Vagina (tissue), 2 donors: ENCODE measurements at regions of chr9 and their contacts with region 1.

Region 1: DNA sequence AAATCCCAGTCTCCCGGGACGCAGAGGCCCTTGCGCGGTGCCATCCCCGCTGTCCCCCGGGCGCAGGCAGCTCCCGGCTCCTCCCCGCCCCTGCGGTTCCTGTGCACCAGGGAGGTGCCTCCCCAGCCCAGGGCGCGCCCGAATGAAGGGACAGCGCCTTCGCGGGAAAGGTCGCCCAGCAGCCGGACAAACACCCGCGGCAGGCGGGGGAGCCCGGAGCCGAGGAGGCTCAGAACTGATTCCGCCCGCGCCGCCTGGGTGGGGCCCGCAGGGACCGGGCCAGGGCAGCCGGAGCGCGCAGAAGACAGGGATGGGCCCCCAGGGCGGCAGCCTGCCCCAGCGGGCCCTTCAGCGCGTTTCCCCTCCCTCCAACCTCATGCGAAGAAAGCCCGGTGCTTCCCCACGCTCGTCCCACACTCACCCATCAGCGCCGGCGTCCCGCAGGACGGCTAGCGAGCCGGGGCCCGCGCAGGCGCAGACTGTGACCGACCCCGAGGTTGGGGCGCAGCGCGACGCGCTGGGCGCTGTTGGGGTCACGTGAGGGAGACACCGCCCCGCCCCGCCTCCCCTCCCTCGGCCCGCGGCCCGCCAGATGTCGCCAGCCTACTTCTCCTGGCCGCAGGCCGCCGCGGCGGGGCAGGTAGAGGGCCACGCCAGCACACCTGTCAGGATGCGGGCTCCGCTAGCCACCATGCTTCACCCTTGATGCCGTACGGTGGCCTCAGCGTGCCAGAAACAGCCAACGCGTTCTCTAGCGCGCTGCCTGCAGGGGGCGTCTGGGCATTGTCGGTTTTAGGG is at the start of gene SLC25A51:
- DNase-seq: peak in 1 of 2 donors; percentile 94
- H3K4me3 ChIP-seq: peak within 1 kb of the TSS; percentile 90 to 94
- H3K27ac ChIP-seq: peak within 1 kb of the TSS; percentile 73
- H3K4me1 ChIP-seq: peaks cover 30% of the 10 kb centered on the region
- H3K27me3 ChIP-seq: no peaks in the 10 kb centered on the region
- CTCF ChIP-seq: peak; percentile 61 to 97 (median 96)
- POLR2A ChIP-seq: no peak
- total RNA-seq, gene SLC25A51: 26.0 TPM

Region 2: DNA sequence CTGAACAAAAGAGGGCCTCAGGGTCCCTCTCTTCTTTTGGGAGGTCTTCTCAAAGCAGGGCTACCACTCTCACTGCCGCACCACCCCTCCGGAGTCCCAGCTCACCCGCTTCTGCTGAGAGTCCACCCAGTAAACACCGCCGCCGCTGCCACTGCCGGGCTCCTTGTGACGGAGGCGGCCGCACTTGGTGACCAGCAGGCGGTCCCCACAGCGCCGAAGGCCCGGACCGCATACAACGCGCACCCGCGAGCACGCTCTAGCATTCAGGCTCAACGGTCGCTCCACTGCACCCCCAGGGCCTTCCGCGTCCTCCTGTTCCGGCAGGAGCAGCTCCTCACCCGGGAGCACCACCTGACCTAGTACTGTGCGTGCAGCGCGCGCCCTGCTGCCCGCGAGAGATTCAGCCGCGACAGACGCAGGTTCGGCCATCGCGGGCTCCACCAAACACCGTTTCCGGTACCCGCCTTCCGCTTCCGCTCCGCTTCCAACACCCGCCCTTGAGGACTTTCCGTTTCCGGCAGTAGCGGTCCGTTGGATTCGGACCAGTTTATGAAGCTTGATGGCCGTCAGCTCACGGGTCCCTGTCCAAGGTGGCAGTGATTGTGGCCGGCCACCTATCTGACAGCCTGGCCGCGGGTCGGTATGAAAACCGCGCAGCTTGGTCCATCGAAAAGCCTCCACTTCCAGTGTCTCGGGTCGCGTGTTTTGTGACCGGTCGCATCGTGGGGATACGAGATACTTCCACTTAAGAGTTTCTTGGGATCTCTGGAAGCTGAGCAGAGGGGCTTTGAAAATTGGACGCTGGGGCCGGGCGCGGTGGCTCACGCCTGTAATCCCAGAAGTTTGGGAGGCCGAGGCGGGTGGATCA is 119.0 kb before region 1 on chr9 and contains the start of gene EXOSC3:
- intact Hi-C with region 1: loop called (anchors 10 kb)
- DNase-seq: no peak
- H3K4me3 ChIP-seq: peak within 1 kb of the TSS; percentile 89 to 96
- H3K27ac ChIP-seq: peak within 1 kb of the TSS; percentile 77
- H3K4me1 ChIP-seq: peaks cover 26% of the 10 kb centered on the region
- H3K27me3 ChIP-seq: no peaks in the 10 kb centered on the region
- CTCF ChIP-seq: no peak
- POLR2A ChIP-seq: no peak
- total RNA-seq, gene EXOSC3: 77.8 TPM

Region 3: DNA sequence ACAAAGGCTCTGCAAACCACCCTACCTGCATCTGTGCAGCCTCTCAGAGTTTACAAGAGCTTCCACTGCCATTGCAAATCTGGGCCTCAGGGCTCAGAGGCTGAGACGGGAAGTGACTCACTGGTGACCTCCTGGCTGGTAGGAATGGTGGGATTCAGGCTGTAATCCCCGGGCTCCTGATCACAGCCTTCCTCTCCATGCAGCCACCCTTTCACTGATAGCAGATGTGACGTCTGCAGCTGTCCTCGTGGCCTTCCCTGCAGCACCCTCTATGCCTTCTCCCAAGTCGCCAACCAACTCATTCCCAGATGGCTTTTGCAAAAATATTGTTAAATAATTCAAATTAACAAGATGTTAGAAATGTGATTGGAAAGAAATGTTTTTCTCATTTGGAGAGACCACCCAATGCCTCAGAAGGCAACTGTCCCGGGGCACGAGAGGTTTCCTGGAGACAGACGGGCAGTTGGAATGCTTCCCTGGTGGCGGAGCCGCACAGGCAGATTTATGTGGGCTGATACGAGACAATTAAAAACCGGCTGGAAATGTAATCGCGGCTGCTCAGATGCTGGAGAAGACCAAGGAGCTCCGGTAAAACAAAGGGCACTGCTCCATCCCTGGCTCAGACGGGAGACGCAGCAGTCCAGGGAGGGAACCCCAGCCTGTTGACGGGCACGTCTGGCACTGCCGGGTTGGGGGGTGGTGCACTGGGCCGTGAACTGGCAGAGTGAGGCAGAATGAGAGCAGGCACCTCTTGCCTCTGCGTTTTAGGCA is 34.5 kb after region 1 on chr9:
- intact Hi-C with region 1: no loop called
- DNase-seq: no peak
- H3K4me3 ChIP-seq: no peak overlapping the region
- H3K27ac ChIP-seq: no peak overlapping the region
- H3K4me1 ChIP-seq: peaks cover 33% of the 10 kb centered on the region
- H3K27me3 ChIP-seq: no peaks in the 10 kb centered on the region
- CTCF ChIP-seq: no peak
- POLR2A ChIP-seq: no peak

Region 4: DNA sequence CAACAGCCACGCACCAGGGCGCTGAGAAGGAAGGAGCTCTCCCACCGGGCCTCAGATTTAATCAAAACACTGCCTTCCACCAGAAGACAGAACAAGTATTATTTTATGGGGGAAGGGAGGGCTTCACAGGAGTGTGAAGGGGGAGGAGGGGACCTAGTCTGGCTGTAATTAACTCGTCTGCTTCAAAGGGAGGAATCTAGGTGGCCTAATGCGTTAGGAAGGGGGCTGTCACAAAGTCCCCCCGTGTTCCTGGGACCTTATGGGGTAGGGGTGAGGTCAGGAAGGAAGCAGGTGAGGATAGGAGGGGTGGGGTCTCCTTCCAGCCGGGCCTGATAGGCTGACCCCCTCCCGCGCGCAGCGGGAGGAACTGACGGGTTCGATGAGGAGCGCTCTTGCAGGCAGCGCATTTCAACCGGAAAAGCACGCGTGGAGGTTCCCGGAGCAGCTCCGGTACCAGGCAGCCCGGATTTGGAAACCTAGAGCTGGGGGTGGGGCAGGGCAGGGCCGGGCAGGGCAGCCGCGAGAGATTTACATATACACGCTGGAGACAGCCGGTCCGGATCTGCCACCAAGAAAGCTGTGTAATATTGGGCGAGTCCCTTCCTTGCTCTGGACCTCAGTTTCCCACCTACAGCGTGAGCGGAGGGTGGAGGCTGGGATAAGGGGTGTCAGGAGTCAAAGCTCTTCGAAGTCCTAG is 163.2 kb after region 1 on chr9:
- intact Hi-C with region 1: no loop called
- DNase-seq: no peak
- H3K4me3 ChIP-seq: peak overlapping the region; percentile 91 to 94
- H3K27ac ChIP-seq: peak overlapping the region; percentile 87
- H3K4me1 ChIP-seq: peaks cover 57% of the 10 kb centered on the region
- H3K27me3 ChIP-seq: no peaks in the 10 kb centered on the region
- CTCF ChIP-seq: no peak
- POLR2A ChIP-seq: no peak

Region 5: GRCh38 chr9:38417003-38417945 is 513.4 kb after region 1 on chr9:
- intact Hi-C with region 1: loop called (anchors 10 kb)
- DNase-seq: no peak
- H3K4me3 ChIP-seq: no peak overlapping the region
- H3K27ac ChIP-seq: no peak overlapping the region
- H3K4me1 ChIP-seq: no peaks in the 10 kb centered on the region
- H3K27me3 ChIP-seq: no peaks in the 10 kb centered on the region
- CTCF ChIP-seq: no peak
- POLR2A ChIP-seq: no peak